Caco-2 (cell line): ENCODE measurements at regions of chr11 and their contacts with region 1.

Region 1: GRCh38 chr11:34468209-34468841 is 29.6 kb downstream of the CAT start:
- DNase-seq: peak; percentile 53 to 54
- H3K4me3 ChIP-seq: no peak overlapping the region
- H3K4me3 Mint-ChIP-seq: no peak overlapping the region
- H3K27ac Mint-ChIP-seq: no peak overlapping the region
- H3K4me1 ChIP-seq: no peaks in the 10 kb centered on the region
- H3K4me1 Mint-ChIP-seq: no peaks in the 10 kb centered on the region
- H3K27me3 ChIP-seq: no peaks in the 10 kb centered on the region
- H3K27me3 Mint-ChIP-seq: no peaks in the 10 kb centered on the region
- CTCF ChIP-seq: peak; percentile 80 to 89

Region 2: DNA sequence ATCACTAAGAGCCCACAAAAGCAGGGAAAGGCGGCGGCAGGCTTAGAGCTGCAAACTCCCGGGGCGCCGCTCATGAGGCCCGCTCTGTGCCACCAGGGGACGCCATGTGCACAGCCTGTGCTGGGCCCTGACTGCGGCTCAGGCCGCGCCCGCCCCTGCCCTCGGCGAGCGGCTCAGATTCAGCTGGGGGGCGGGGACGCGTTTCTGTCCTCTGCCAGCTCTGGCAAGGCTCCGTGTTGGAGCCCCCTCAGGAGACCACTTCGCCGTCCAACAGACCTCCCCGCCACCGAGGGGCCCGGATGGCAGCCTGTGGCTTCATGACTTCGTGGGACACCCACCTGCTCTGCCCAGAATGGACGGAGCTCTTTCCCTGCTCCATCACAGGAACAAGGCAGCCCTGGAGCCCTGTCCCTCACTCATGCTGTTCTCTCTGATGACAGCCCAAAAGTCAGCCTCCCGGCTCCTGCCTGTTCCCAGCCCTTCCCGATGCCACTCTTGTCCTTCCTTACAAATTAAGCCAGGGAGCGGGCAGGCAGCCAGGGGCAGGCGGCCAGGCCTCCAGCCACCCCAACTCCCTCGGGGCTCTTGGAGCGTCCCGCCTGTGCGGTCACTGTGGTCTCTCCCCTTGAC is 293.8 kb before region 1 on chr11:
- CTCF ChIA-PET with region 1: interaction called, 3 read pairs
- POLR2A ChIA-PET with region 1: no interaction called
- intact Hi-C with region 1: loop called (anchors 1 kb)
- DNase-seq: peak; percentile 71 to 88
- H3K4me3 ChIP-seq: peak overlapping the region; percentile 15; the same call in 1 of the 2 replicates
- H3K4me3 Mint-ChIP-seq: peak overlapping the region; percentile 75
- H3K27ac Mint-ChIP-seq: no peak overlapping the region
- H3K4me1 ChIP-seq: 0 out of 2 replicates have a peak, but pooled peaks cover 3% of the 10 kb centered on the region
- H3K4me1 Mint-ChIP-seq: no peaks in the 10 kb centered on the region
- H3K27me3 ChIP-seq: no peaks in the 10 kb centered on the region
- H3K27me3 Mint-ChIP-seq: no peaks in the 10 kb centered on the region
- CTCF ChIP-seq: peak; percentile 91 to 98

Region 3: DNA sequence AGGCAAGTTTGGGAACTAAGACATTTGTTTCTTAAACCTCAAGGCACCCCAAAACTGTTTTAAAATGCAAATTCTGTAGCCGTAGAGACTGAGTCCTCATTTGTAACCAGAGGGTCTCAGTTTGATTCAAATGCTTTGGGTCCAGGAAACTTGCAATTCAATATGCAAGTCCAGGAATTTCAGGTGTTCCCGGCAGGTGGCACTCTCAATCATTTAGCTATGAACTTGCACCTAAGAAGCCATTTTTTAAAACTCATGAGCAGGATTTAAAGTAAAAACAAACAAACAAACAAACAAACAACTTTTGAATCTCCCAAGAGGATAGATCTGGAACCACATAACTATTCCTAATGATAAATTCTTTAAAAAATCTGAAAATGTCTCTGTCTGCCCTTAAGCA is 101.8 kb before region 1 on chr11:
- CTCF ChIA-PET with region 1: interaction called, 16 read pairs
- POLR2A ChIA-PET with region 1: no interaction called
- intact Hi-C with region 1: loop called (anchors 1 kb)
- DNase-seq: no peak
- H3K4me3 ChIP-seq: no peak overlapping the region
- H3K4me3 Mint-ChIP-seq: no peak overlapping the region
- H3K27ac Mint-ChIP-seq: no peak overlapping the region
- H3K4me1 ChIP-seq: 0 out of 2 replicates have a peak, but pooled peaks cover 4% of the 10 kb centered on the region
- H3K4me1 Mint-ChIP-seq: peaks cover 9% of the 10 kb centered on the region
- H3K27me3 ChIP-seq: no peaks in the 10 kb centered on the region
- H3K27me3 Mint-ChIP-seq: no peaks in the 10 kb centered on the region
- CTCF ChIP-seq: peak in 1 of 2 experiments; percentile 38

Region 4: DNA sequence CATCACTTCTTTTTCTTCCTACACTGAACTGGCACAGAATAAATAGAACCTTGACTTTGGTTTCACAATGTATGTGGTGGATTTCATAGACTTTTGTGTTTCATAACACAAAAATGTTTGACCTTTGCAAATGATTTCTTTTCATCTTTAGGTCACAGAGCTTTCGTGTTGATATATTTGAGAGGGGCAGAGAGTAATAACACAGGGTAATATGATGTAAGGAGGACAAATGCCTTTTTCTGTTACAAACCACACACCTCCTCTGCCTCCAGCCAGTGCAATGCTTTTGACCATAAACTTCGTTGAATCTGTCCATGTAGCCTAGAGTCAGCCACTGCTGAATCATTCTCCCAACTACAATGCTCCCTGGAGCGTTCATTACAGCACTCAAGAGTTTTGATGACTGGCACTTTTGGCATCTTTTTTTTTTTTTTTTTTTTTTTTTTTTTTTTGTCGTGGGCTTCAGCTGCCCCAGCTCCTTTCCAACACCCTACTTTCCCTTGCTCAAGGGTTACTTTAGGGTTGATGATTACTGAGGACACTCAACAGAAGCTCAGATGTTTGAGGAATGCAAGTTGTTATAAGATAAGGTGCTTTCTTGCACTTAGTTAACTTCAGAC is 41.0 kb before region 1 on chr11:
- CTCF ChIA-PET with region 1: no interaction called
- POLR2A ChIA-PET with region 1: no interaction called
- intact Hi-C with region 1: loop called (anchors 5 kb)
- DNase-seq: peak; percentile 49 to 52
- H3K4me3 ChIP-seq: no peak overlapping the region
- H3K4me3 Mint-ChIP-seq: peak overlapping the region; percentile 17
- H3K27ac Mint-ChIP-seq: peak overlapping the region; percentile 24
- H3K4me1 ChIP-seq: peaks cover 12% of the 10 kb centered on the region
- H3K4me1 Mint-ChIP-seq: peaks cover 14% of the 10 kb centered on the region
- H3K27me3 ChIP-seq: no peaks in the 10 kb centered on the region
- H3K27me3 Mint-ChIP-seq: peaks cover 2% of the 10 kb centered on the region
- CTCF ChIP-seq: no peak